ENCODE measurements at regions of chr10 and their contacts with region 1.

Region 1: DNA sequence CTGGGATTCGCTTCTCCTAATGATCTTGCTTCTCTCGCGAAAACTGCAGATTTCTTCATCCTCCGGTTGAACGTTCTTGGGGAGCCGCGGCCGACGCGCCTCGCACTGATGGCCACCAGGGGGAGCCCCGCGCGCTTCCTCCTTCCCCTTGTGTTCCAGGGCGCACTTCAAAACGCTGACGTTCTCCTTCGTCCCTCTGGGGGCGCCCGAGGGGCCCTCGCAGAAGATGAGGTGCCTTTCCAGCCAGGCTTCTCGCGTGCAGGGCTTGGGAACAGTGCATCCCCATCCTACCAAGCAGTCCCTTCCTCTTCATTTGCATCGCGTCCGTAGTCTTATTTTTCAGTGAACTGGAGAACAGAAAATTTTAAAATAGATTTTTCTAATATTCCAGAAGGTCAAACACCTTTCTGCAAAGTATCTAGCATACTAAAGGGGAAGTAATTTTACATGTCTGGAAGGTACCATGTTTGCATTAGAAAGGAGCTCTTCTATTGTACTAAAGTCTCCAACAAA is 22.5 kb downstream of the GSTO2 start:
- DNase-seq: no peak
- H3K4me3 ChIP-seq: no peak overlapping the region
- H3K27ac ChIP-seq: no peak overlapping the region
- H3K4me1 ChIP-seq: peaks cover 10% of the 10 kb centered on the region
- H3K27me3 ChIP-seq: no peaks in the 10 kb centered on the region
- CTCF ChIP-seq: peak; percentile 99 to 100 (median 99)
- POLR2A ChIP-seq: no peak

Region 2: GRCh38 chr10:104349623-104350126 is 58.2 kb after region 1 on chr10:
- intact Hi-C with region 1: loop called (anchors 5 kb)
- DNase-seq: no peak
- H3K4me3 ChIP-seq: no peak overlapping the region
- H3K27ac ChIP-seq: peak overlapping the region; percentile 55
- H3K4me1 ChIP-seq: peaks cover 24% of the 10 kb centered on the region
- H3K27me3 ChIP-seq: no peaks in the 10 kb centered on the region
- CTCF ChIP-seq: no peak
- POLR2A ChIP-seq: no peak

Region 3: GRCh38 chr10:104441329-104442000 is 150.0 kb after region 1 on chr10:
- intact Hi-C with region 1: no loop called
- DNase-seq: no peak
- H3K4me3 ChIP-seq: no peak overlapping the region
- H3K27ac ChIP-seq: no peak overlapping the region
- H3K4me1 ChIP-seq: peaks cover 5% of the 10 kb centered on the region
- H3K27me3 ChIP-seq: no peaks in the 10 kb centered on the region
- CTCF ChIP-seq: no peak
- POLR2A ChIP-seq: no peak

Region 4: GRCh38 chr10:104580774-104581675 is 289.5 kb after region 1 on chr10:
- intact Hi-C with region 1: loop called (anchors 5 kb)
- DNase-seq: peak in 1 of 2 donors; percentile 65
- H3K4me3 ChIP-seq: no peak overlapping the region
- H3K27ac ChIP-seq: no peak overlapping the region
- H3K4me1 ChIP-seq: no peaks in the 10 kb centered on the region
- H3K27me3 ChIP-seq: no peaks in the 10 kb centered on the region
- CTCF ChIP-seq: peak; percentile 48 to 58 (median 50)
- POLR2A ChIP-seq: no peak